Astrocyte of the cerebellum (primary cell): ENCODE measurements at regions of chr2 and their contacts with region 1.

Region 1: GRCh38 chr2:129199501-129199900 is 780.0 kb upstream of the RAB6C start:
- DNase-seq: no peak
- H3K4me3 ChIP-seq: no peak overlapping the region
- CTCF ChIP-seq: no peak

Region 2: GRCh38 chr2:129016972-129017371 is 182.5 kb before region 1 on chr2:
- in situ Hi-C with region 1: no loop called
- DNase-seq: no peak
- H3K4me3 ChIP-seq: no peak overlapping the region
- CTCF ChIP-seq: no peak

Region 3: GRCh38 chr2:129160879-129161278 is 38.6 kb before region 1 on chr2:
- in situ Hi-C with region 1: no loop called
- DNase-seq: no peak
- H3K4me3 ChIP-seq: no peak overlapping the region
- CTCF ChIP-seq: no peak

Region 4: GRCh38 chr2:129253461-129253812 is 53.9 kb after region 1 on chr2:
- in situ Hi-C with region 1: loop called (anchors 5 kb)
- DNase-seq: no peak
- H3K4me3 ChIP-seq: no peak overlapping the region
- CTCF ChIP-seq: peak; percentile 57

Region 5: DNA sequence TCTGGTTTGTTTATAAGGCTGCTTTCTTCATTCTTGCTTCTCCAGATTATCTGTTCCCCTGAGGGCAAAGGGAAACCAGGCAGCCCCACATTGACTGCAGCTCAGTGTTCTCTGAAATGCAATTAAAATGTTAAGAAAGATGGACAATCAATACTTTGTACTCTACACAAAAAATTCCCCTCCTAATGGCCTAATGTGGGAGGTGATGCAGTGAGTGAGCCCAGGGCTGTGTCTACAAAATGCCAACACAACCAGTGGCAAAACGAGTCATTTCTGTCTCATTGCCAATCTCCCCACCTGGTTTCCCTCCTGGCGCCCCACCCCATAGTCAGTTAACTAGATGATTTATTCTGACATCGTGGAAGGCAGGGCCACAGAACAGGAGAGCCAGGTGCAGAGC is 238.3 kb after region 1 on chr2:
- in situ Hi-C with region 1: no loop called
- DNase-seq: no peak
- H3K4me3 ChIP-seq: no peak overlapping the region
- CTCF ChIP-seq: no peak